ENCODE measurements at regions of chr2 and their contacts with region 1.

Region 1: GRCh38 chr2:246489-247144 is 17.2 kb downstream of the SH3YL1 start:
- DNase-seq: peak; percentile 61
- H3K4me3 ChIP-seq: no peak overlapping the region
- H3K27ac ChIP-seq: peak overlapping the region in 1 of 2 experiments; percentile 11; a peak in 1 of 4 replicates
- H3K4me1 ChIP-seq: peaks cover 4 to 5% of the 10 kb centered on the region in 2 experiments; a peak in 2 of 4 replicates
- H3K27me3 ChIP-seq: no peaks in the 10 kb centered on the region
- CTCF ChIP-seq: peak; percentile 73
- EP300 ChIP-seq: no peak
- RAD21 ChIP-seq: peak; percentile 59

Region 2: DNA sequence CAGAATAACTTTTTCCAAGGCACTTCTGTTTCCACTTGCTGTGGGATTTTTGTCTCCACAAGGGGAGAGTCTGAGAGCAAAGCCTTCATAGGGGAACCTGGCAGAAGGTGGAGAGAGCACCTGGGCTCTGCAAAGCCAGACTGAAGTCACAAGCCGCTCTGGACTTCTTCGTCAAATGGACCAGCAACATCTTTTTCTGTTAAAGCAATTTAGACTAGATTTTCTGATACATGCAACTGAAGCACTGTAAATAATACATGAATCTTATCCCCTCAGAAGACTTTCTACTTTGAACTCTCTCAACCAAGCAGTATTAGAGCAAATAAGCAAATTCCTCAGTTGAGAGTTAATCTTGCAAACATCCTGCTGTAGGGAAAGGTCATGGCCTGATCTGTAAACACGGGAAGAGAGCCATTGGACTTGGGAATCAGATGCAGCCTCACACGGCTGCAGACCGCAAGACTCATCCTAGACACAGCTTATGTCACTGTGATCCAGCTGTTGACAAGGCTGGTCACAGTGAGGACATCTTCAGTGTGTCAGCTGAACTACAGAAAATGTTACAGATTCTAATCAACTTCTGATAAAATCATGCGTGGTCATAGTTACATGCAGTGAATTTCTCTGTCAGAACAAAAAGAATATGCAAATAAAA is 14.0 kb after region 1 on chr2:
- CTCF ChIA-PET with region 1: interaction called, 26 read pairs
- POLR2A ChIA-PET with region 1: no interaction called
- DNase-seq: no peak
- H3K4me3 ChIP-seq: no peak overlapping the region; a peak in 1 of 4 replicates
- H3K27ac ChIP-seq: no peak overlapping the region
- H3K4me1 ChIP-seq: peaks cover 1 to 14% of the 10 kb centered on the region in 2 experiments; a peak in 3 of 4 replicates
- H3K27me3 ChIP-seq: no peaks in the 10 kb centered on the region
- CTCF ChIP-seq: no peak
- EP300 ChIP-seq: no peak
- RAD21 ChIP-seq: no peak

Measured in SK-N-SH (cell line).